HCT116 (cell line): ENCODE measurements at regions of chr4 and their contacts with region 1.

Region 1: GRCh38 chr4:145734576-145735346 is 54.8 kb downstream of the C4orf51 start:
- DNase-seq: no peak
- ATAC-seq: peak; percentile 39; the same call in 1 of the 2 replicates
- H3K4me3 ChIP-seq: peak overlapping the region in 1 of 2 experiments; percentile 3; a peak in 1 of 4 replicates
- H3K27ac ChIP-seq: 0 out of 2 replicates have a peak overlapping the region, but pooled peaks have one; percentile 4
- H3K4me1 ChIP-seq: peaks cover 19 to 46% of the 10 kb centered on the region in 2 experiments
- H3K27me3 ChIP-seq: no peaks in the 10 kb centered on the region
- CTCF ChIP-seq: no peak
- POLR2A ChIP-seq: no peak
- RAD21 ChIP-seq: no peak

Region 2: GRCh38 chr4:145580906-145581305 is 153.9 kb before region 1 on chr4:
- CTCF ChIA-PET with region 1: no interaction called
- POLR2A ChIA-PET with region 1: no interaction called
- RAD21 ChIA-PET with region 1: no interaction called
- intact Hi-C with region 1: no loop called
- DNase-seq: no peak
- ATAC-seq: peak; percentile 69
- H3K4me3 ChIP-seq: no peak overlapping the region
- H3K27ac ChIP-seq: no peak overlapping the region
- H3K4me1 ChIP-seq: peaks cover 0 to 6% of the 10 kb centered on the region in 2 experiments; a peak in 3 of 4 replicates
- H3K27me3 ChIP-seq: no peaks in the 10 kb centered on the region
- CTCF ChIP-seq: no peak
- POLR2A ChIP-seq: no peak
- RAD21 ChIP-seq: no peak

Region 3: GRCh38 chr4:145779319-145779801 is 44.6 kb after region 1 on chr4:
- CTCF ChIA-PET with region 1: no interaction called
- POLR2A ChIA-PET with region 1: no interaction called
- RAD21 ChIA-PET with region 1: no interaction called
- intact Hi-C with region 1: no loop called
- DNase-seq: no peak
- ATAC-seq: no peak
- H3K4me3 ChIP-seq: no peak overlapping the region
- H3K27ac ChIP-seq: no peak overlapping the region
- H3K4me1 ChIP-seq: no peaks in the 10 kb centered on the region
- H3K27me3 ChIP-seq: no peaks in the 10 kb centered on the region
- CTCF ChIP-seq: no peak
- POLR2A ChIP-seq: no peak
- RAD21 ChIP-seq: no peak

Region 4: DNA sequence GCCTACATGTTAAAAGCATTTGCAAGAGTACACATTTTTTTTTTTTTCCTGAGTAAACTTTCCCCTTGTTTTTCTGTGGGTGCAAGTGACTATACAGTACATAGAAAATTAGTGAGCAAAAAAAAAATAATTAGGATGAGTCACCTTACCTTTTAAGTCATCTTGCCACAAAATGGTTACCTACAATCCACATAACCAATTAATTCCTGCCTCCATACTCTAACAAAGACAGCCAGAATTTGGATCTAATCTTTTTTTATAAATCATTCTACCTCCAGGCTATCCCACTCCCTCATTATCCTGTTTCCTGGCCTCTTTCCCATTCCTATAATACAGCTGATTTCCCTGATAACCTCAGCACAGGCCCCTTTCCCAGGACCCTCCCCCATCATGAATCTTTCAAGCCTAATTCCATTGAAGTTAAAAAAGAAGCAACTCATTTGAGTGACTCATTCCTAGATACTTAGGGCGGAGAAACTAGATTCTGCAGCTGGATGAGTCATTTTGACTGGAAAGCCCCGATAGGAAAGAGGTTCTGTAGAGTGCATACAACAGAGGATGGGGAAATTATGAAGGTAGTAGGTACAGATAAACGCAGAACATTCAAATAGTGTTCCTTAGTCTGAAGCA is 73.4 kb after region 1 on chr4:
- CTCF ChIA-PET with region 1: no interaction called
- POLR2A ChIA-PET with region 1: no interaction called
- RAD21 ChIA-PET with region 1: no interaction called
- intact Hi-C with region 1: loop called (anchors 2 kb)
- DNase-seq: peak; percentile 96
- ATAC-seq: peak; percentile 84
- H3K4me3 ChIP-seq: peak overlapping the region; percentile 6 to 23; a peak in 2 of 4 replicates
- H3K27ac ChIP-seq: peak overlapping the region; percentile 88
- H3K4me1 ChIP-seq: peaks cover 46 to 90% of the 10 kb centered on the region in 2 experiments
- H3K27me3 ChIP-seq: no peaks in the 10 kb centered on the region
- CTCF ChIP-seq: no peak
- POLR2A ChIP-seq: no peak
- RAD21 ChIP-seq: peak; percentile 37

Region 5: GRCh38 chr4:145936142-145936996 is 201.6 kb after region 1 on chr4:
- CTCF ChIA-PET with region 1: no interaction called
- POLR2A ChIA-PET with region 1: interaction called, 3 read pairs
- RAD21 ChIA-PET with region 1: no interaction called
- intact Hi-C with region 1: loop called (anchors 2 kb)
- DNase-seq: no peak
- ATAC-seq: peak; percentile 56
- H3K4me3 ChIP-seq: peak overlapping the region; percentile 75 to 87
- H3K27ac ChIP-seq: peak overlapping the region; percentile 92
- H3K4me1 ChIP-seq: peaks cover 21 to 46% of the 10 kb centered on the region in 2 experiments
- H3K27me3 ChIP-seq: no peaks in the 10 kb centered on the region
- CTCF ChIP-seq: peak in 1 of 3 experiments; percentile 27; a peak in 1 of 6 replicates
- POLR2A ChIP-seq: no peak
- RAD21 ChIP-seq: no peak